ENCODE measurements at regions of chr10 and their contacts with region 1.

Region 1: GRCh38 chr10:87094373-87095235 is at the starts of genes GLUD1 and SHLD2:
- DNase-seq: peak; percentile 94
- H3K4me3 Mint-ChIP-seq: peak within 1 kb of the TSS; percentile 97
- H3K27ac Mint-ChIP-seq: peak within 1 kb of the TSS; percentile 95
- H3K4me1 Mint-ChIP-seq: peaks cover 48% of the 10 kb centered on the region
- H3K27me3 Mint-ChIP-seq: no peaks in the 10 kb centered on the region
- total RNA-seq, gene GLUD1: 174 to 180 TPM
- total RNA-seq, gene SHLD2: 32.2 to 32.6 TPM

Region 2: GRCh38 chr10:86755740-86756510 is 338.7 kb before region 1 on chr10:
- CTCF ChIA-PET with region 1: no interaction called
- POLR2A ChIA-PET with region 1: interaction called, 7 read pairs
- intact Hi-C with region 1: loop called (anchors 5 kb)
- DNase-seq: peak; percentile 91
- H3K4me3 Mint-ChIP-seq: peak overlapping the region; percentile 78
- H3K27ac Mint-ChIP-seq: peak overlapping the region; percentile 33
- H3K4me1 Mint-ChIP-seq: peaks cover 38% of the 10 kb centered on the region
- H3K27me3 Mint-ChIP-seq: peaks cover 1% of the 10 kb centered on the region

Region 3: GRCh38 chr10:86922553-86922961 is 172.0 kb before region 1 on chr10:
- CTCF ChIA-PET with region 1: no interaction called
- POLR2A ChIA-PET with region 1: no interaction called
- intact Hi-C with region 1: no loop called
- DNase-seq: no peak
- H3K4me3 Mint-ChIP-seq: no peak overlapping the region
- H3K27ac Mint-ChIP-seq: no peak overlapping the region
- H3K4me1 Mint-ChIP-seq: no peaks in the 10 kb centered on the region
- H3K27me3 Mint-ChIP-seq: no peaks in the 10 kb centered on the region

Region 4: GRCh38 chr10:86971232-86971991 is 123.2 kb before region 1 on chr10:
- CTCF ChIA-PET with region 1: no interaction called
- POLR2A ChIA-PET with region 1: interaction called, 3 read pairs
- intact Hi-C with region 1: loop called (anchors 1 kb)
- DNase-seq: peak; percentile 89
- H3K4me3 Mint-ChIP-seq: peak overlapping the region; percentile 71
- H3K27ac Mint-ChIP-seq: peak overlapping the region; percentile 58
- H3K4me1 Mint-ChIP-seq: peaks cover 22% of the 10 kb centered on the region
- H3K27me3 Mint-ChIP-seq: peaks cover 2% of the 10 kb centered on the region

Region 5: GRCh38 chr10:87079106-87079836 is 15.3 kb before region 1 on chr10:
- CTCF ChIA-PET with region 1: interaction called, 4 read pairs
- POLR2A ChIA-PET with region 1: interaction called, 53 read pairs
- intact Hi-C with region 1: loop called (anchors 1 kb)
- DNase-seq: no peak
- H3K4me3 Mint-ChIP-seq: no peak overlapping the region
- H3K27ac Mint-ChIP-seq: no peak overlapping the region
- H3K4me1 Mint-ChIP-seq: peaks cover 38% of the 10 kb centered on the region
- H3K27me3 Mint-ChIP-seq: no peaks in the 10 kb centered on the region

Measured in activated CD4-positive, alpha-beta memory T cell treated with anti-CD3 and anti-CD28 coated beads for 36 hours (primary cell).